CD4-positive, alpha-beta memory T cell (primary cell): ENCODE measurements at regions of chr2 and their contacts with region 1.

Region 1: GRCh38 chr2:227766373-227766883 is 20.7 kb downstream of the SCYGR8 start:
- DNase-seq: peak in 4 of 5 donors; percentile 41 to 52 (median 46)
- H3K4me3 ChIP-seq: no peak overlapping the region
- H3K4me3 Mint-ChIP-seq: no peak overlapping the region
- H3K27ac ChIP-seq: no peak overlapping the region
- H3K27ac Mint-ChIP-seq: peak overlapping the region in 1 of 7 donors; percentile 66
- H3K4me1 ChIP-seq: no peaks in the 10 kb centered on the region
- H3K4me1 Mint-ChIP-seq: peaks cover 0 to 4% (median 2%) of the 10 kb centered on the region in 4 donors
- H3K27me3 ChIP-seq: no peaks in the 10 kb centered on the region
- H3K27me3 Mint-ChIP-seq: peaks cover 0 to 3% of the 10 kb centered on the region in 2 donors

Region 2: GRCh38 chr2:227238238-227239237 is 527.9 kb before region 1 on chr2:
- CTCF ChIA-PET with region 1: interaction called, 13 read pairs
- POLR2A ChIA-PET with region 1: no interaction called
- intact Hi-C with region 1: loop called (anchors 10 kb)
- DNase-seq: peak; percentile 38 to 48 (median 40)
- H3K4me3 ChIP-seq: no peak overlapping the region
- H3K4me3 Mint-ChIP-seq: no peak overlapping the region
- H3K27ac ChIP-seq: no peak overlapping the region
- H3K27ac Mint-ChIP-seq: no peak overlapping the region
- H3K4me1 ChIP-seq: no peaks in the 10 kb centered on the region
- H3K4me1 Mint-ChIP-seq: no peaks in the 10 kb centered on the region
- H3K27me3 ChIP-seq: no peaks in the 10 kb centered on the region
- H3K27me3 Mint-ChIP-seq: peaks cover 9 to 15% of the 10 kb centered on the region in 2 donors

Region 3: DNA sequence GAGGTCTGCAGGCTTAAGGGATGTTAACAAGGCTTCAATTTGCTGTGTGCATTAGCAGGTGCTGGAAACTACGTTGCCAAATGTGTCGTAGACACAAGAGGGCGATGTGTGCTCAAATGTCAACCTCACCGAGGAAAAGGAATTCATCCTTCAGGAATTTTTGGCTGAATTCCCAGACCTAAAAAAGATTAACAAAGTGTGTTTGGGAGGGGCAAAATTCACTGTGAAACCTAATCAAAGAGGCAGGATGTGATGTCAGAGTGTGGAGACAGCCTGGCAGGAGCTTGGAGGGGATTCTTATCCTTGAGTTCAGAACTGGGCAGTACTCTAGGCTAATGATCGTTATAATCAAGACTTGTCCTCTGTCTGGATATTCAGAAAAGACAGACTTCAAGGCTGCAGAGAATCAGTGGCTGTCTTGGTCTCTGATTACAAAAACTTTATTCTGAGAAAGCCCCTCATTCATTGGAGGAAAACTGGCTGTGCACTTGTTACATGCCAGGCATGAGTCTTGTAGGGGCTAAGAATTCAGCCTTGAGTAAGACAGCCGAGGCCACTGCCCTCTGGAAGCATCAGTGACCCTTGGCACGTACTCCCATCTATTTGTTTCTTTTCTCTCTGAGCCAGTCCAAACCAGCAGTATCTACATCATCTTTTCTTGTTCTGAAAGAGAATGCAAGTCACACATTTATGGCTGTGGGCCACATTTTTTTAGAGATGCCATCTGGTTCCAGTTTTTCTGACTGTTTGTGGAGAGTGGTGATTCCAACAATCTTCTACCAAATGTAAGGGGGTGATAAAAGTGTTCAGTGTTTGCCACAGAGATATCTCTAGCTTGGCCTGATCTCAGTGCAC is 360.0 kb before region 1 on chr2:
- CTCF ChIA-PET with region 1: interaction called, 7 read pairs
- POLR2A ChIA-PET with region 1: no interaction called
- intact Hi-C with region 1: loop called (anchors 10 kb)
- DNase-seq: no peak
- H3K4me3 ChIP-seq: no peak overlapping the region
- H3K4me3 Mint-ChIP-seq: no peak overlapping the region
- H3K27ac ChIP-seq: no peak overlapping the region
- H3K27ac Mint-ChIP-seq: peak overlapping the region in 2 of 7 donors; percentile 31 to 72
- H3K4me1 ChIP-seq: peaks cover 12% of the 10 kb centered on the region
- H3K4me1 Mint-ChIP-seq: peaks cover 10 to 13% (median 11%) of the 10 kb centered on the region in 4 donors
- H3K27me3 ChIP-seq: no peaks in the 10 kb centered on the region
- H3K27me3 Mint-ChIP-seq: no peaks in the 10 kb centered on the region

Region 4: DNA sequence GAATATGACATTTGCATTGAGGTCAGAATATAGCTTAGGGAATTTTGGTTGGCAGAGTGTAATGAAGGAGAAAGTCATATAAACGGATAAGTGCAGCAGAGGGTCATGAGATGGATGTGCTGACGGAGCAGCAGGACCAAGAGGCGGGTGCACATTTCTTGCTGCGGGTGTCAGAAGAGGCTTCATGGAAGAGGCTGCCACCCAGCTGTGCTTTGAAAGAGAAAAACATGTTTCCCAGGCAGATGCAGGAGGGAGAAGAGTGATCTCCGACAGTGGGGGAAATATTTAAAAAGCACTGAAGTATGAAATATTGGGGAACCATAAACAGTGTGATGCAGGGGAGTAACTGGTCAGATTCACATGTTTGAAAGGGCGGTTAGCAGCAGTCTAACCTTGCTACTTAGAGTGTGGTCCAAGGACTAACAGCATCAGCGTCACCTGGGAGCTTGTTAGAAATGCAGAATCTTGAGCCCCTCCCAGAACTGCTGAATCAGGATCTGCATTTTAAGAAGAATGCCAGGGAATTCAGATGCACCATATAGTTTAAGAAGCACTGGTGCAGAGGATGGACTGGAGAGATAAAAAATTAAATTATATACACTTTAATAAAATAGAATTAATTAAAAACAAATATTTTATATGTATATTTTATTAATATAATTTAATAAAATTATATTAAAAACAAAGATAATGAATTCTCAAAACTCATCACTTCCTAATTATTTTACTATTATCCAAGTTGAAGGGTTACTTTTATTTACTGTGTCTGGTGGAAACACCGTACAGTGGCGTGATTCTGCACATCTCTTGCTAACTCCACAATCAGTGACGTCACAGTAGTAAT is 342.6 kb before region 1 on chr2:
- CTCF ChIA-PET with region 1: no interaction called
- POLR2A ChIA-PET with region 1: no interaction called
- intact Hi-C with region 1: no loop called
- DNase-seq: no peak
- H3K4me3 ChIP-seq: no peak overlapping the region
- H3K4me3 Mint-ChIP-seq: no peak overlapping the region
- H3K27ac ChIP-seq: no peak overlapping the region
- H3K27ac Mint-ChIP-seq: no peak overlapping the region
- H3K4me1 ChIP-seq: no peaks in the 10 kb centered on the region
- H3K4me1 Mint-ChIP-seq: no peaks in the 10 kb centered on the region
- H3K27me3 ChIP-seq: no peaks in the 10 kb centered on the region
- H3K27me3 Mint-ChIP-seq: no peaks in the 10 kb centered on the region

Region 5: DNA sequence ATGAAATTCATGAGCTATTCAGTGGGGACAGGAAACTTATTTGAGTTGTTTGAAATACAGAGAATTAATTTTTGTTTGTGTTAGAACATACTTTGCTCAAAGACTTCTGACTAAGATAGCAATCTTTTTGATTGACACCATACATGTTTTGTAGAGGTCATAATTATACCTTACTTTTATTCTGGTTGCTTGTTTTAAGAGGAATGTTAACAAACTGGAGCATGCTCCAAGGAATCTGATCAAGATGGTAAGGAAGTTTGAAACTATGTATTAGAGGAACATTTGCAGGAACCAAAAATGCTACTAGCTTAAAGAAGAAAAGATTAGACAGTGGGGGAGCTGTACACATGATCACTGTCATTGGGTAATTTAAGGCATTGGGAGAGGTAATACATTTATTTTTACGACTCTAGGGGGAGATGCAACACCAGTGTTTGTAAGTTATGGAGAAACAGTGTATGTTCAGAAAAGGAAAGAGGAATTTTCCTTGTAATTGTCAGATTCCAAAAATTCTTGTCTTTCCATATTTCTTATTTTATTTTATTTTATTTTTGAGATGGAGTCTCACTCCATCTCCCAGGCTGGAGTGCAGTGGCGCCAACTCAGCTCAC is 286.5 kb before region 1 on chr2:
- CTCF ChIA-PET with region 1: interaction called, 17 read pairs
- POLR2A ChIA-PET with region 1: no interaction called
- intact Hi-C with region 1: loop called (anchors 1 kb)
- DNase-seq: peak in 1 of 5 donors; percentile 16
- H3K4me3 ChIP-seq: no peak overlapping the region
- H3K4me3 Mint-ChIP-seq: peak overlapping the region in 6 of 8 donors; percentile 14 to 67 (median 43)
- H3K27ac ChIP-seq: no peak overlapping the region
- H3K27ac Mint-ChIP-seq: peak overlapping the region in 6 of 7 donors; percentile 1 to 75 (median 17)
- H3K4me1 ChIP-seq: peaks cover 80% of the 10 kb centered on the region
- H3K4me1 Mint-ChIP-seq: peaks cover 52 to 87% (median 63%) of the 10 kb centered on the region in 4 donors
- H3K27me3 ChIP-seq: no peaks in the 10 kb centered on the region
- H3K27me3 Mint-ChIP-seq: no peaks in the 10 kb centered on the region

Region 6: DNA sequence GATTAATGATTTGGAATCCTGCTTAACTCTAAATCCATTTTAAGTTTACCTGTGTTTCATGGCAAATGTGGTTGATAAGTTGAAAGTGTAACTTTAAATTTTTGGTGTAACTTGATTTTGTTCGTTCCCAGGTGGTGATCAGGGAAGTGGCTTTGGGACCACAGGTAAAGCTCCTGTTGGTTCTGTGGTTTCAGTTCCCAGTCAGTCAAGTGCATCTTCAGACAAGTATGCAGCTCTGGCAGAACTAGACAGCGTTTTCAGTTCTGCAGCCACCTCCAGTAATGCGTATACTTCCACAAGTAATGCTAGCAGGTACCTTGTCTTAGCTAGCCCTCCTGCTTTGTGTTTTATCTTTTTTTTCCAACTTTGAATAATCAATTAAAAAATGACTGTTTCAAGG is 231.7 kb before region 1 on chr2:
- CTCF ChIA-PET with region 1: no interaction called
- POLR2A ChIA-PET with region 1: no interaction called
- intact Hi-C with region 1: no loop called
- DNase-seq: no peak
- H3K4me3 ChIP-seq: no peak overlapping the region
- H3K4me3 Mint-ChIP-seq: no peak overlapping the region
- H3K27ac ChIP-seq: no peak overlapping the region
- H3K27ac Mint-ChIP-seq: no peak overlapping the region
- H3K4me1 ChIP-seq: no peaks in the 10 kb centered on the region
- H3K4me1 Mint-ChIP-seq: no peaks in the 10 kb centered on the region
- H3K27me3 ChIP-seq: no peaks in the 10 kb centered on the region
- H3K27me3 Mint-ChIP-seq: no peaks in the 10 kb centered on the region

Region 7: DNA sequence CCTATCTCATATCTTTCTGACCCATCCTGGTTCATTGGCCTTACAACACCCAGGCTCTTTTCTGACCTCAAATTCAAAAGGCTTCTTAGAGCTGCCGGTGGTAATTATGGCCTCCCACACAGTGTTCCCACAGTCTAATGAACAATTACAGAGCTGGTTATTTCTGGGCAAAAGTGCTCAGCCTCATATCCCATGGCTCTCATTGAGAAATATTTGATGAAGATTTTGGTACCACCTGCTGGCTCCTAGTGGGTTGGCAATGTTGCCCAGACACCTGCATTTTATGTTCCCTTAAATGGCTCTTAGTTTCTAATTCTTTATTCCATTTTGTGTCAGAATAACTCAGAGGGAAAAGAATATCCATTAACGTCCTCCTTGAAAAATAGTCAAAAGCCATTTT is 187.8 kb before region 1 on chr2:
- CTCF ChIA-PET with region 1: no interaction called
- POLR2A ChIA-PET with region 1: no interaction called
- intact Hi-C with region 1: no loop called
- DNase-seq: no peak
- H3K4me3 ChIP-seq: no peak overlapping the region
- H3K4me3 Mint-ChIP-seq: no peak overlapping the region
- H3K27ac ChIP-seq: no peak overlapping the region
- H3K27ac Mint-ChIP-seq: no peak overlapping the region
- H3K4me1 ChIP-seq: no peaks in the 10 kb centered on the region
- H3K4me1 Mint-ChIP-seq: no peaks in the 10 kb centered on the region
- H3K27me3 ChIP-seq: peaks cover 4% of the 10 kb centered on the region
- H3K27me3 Mint-ChIP-seq: peaks cover 31 to 45% of the 10 kb centered on the region in 2 donors

Region 8: GRCh38 chr2:227627769-227628168 is 138.7 kb before region 1 on chr2:
- CTCF ChIA-PET with region 1: no interaction called
- POLR2A ChIA-PET with region 1: no interaction called
- intact Hi-C with region 1: no loop called
- DNase-seq: no peak
- H3K4me3 ChIP-seq: no peak overlapping the region
- H3K4me3 Mint-ChIP-seq: no peak overlapping the region
- H3K27ac ChIP-seq: no peak overlapping the region
- H3K27ac Mint-ChIP-seq: no peak overlapping the region
- H3K4me1 ChIP-seq: no peaks in the 10 kb centered on the region
- H3K4me1 Mint-ChIP-seq: no peaks in the 10 kb centered on the region
- H3K27me3 ChIP-seq: no peaks in the 10 kb centered on the region
- H3K27me3 Mint-ChIP-seq: peaks cover 6 to 13% of the 10 kb centered on the region in 2 donors

Region 9: DNA sequence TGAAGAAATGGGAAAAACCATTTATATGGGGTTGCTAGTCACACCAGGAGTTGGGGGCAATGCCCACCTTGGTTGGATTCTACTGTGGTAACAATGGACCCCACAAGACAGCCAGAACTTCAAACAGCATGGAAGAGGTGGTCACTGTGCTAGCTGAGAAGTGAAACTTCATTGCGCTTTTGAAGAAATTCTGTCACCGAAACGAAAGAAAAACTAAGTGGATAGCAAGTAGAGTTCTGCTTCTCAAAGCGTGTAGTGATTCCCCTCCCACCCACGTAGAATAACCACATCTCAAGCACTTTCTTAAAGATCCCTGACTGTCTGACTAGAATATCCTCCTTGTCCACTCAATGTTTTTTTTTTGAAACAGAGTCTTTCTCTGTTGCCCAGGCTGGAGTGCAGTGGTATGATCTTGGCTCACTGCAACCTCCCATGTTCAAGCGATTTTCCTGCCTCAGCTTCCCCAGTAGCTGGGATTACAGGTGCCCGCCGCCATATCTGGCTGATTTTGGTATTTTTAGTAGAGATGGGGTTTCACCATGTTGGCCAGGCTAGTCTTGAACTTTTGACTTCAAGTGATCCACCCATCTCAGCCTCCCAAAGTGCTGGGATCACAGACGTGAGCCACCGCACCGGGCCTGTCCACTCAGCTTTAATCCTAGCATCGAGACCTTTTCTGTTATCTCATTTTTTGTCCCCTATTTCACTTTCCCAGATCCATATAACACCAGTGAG is 17.1 kb after region 1 on chr2:
- CTCF ChIA-PET with region 1: interaction called, 37 read pairs
- POLR2A ChIA-PET with region 1: no interaction called
- intact Hi-C with region 1: no loop called
- DNase-seq: peak in 4 of 5 donors; percentile 34 to 57 (median 47)
- H3K4me3 ChIP-seq: peak overlapping the region; percentile 8 to 24
- H3K4me3 Mint-ChIP-seq: peak overlapping the region; percentile 79 to 94 (median 89)
- H3K27ac ChIP-seq: peak overlapping the region; percentile 59
- H3K27ac Mint-ChIP-seq: peak overlapping the region; percentile 86 to 95 (median 95)
- H3K4me1 ChIP-seq: peaks cover 17% of the 10 kb centered on the region
- H3K4me1 Mint-ChIP-seq: peaks cover 8 to 26% (median 18%) of the 10 kb centered on the region in 4 donors
- H3K27me3 ChIP-seq: no peaks in the 10 kb centered on the region
- H3K27me3 Mint-ChIP-seq: peaks cover 0 to 3% of the 10 kb centered on the region in 2 donors